Activated CD8-positive, alpha-beta T cell treated with anti-CD3 and anti-CD28 coated beads for 36 hours (primary cell): ENCODE measurements at regions of chr1 and their contacts with region 1.

Region 1: DNA sequence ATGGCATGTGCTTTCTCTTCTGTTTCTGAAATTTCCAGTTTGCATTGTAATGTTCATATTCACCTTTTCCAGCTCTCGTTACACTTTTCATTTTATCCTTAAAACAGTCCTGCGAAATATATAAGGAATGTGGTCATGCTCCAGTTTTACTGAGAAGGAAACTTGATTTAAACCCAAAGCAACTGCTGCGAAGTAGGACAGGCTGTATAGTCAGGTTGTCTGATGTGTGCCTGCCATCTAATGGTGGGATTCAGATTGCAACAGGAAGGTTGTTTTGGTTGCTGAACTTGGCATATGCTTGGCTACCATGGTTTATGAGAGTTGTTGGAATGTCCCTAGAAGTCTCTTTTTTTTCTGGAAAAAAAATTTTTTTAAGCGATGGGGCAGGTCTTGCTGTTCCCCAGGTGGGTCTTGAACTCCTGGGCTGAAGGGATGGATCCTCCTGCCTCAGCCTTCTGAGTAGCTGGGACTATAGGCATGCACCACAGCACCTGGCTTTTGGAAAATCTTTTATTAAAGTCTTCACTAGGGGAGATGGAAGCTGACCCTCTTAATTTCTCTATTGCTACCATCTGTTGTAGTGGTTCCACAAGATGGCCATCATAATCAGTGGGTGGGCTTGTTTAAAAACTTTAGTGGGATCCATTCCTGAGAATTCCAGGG is 86.9 kb downstream of the UCK2 start:
- DNase-seq: peak; percentile 79
- ATAC-seq: peak; percentile 91
- H3K4me3 Mint-ChIP-seq: no peak overlapping the region
- H3K27ac Mint-ChIP-seq: no peak overlapping the region
- H3K4me1 Mint-ChIP-seq: no peaks in the 10 kb centered on the region
- H3K27me3 Mint-ChIP-seq: no peaks in the 10 kb centered on the region
- CTCF ChIP-seq: peak; percentile 85

Region 2: GRCh38 chr1:165392634-165393571 is 521.4 kb before region 1 on chr1:
- CTCF ChIA-PET with region 1: interaction called, 4 read pairs
- POLR2A ChIA-PET with region 1: no interaction called
- intact Hi-C with region 1: loop called (anchors 10 kb)
- DNase-seq: peak; percentile 89
- ATAC-seq: peak; percentile 99
- H3K4me3 Mint-ChIP-seq: peak overlapping the region; percentile 60
- H3K27ac Mint-ChIP-seq: peak overlapping the region; percentile 77
- H3K4me1 Mint-ChIP-seq: peaks cover 9% of the 10 kb centered on the region
- H3K27me3 Mint-ChIP-seq: peaks cover 66% of the 10 kb centered on the region
- CTCF ChIP-seq: peak; percentile 87

Region 3: GRCh38 chr1:165697881-165698760 is 216.1 kb before region 1 on chr1 and contains the start of gene ALDH9A1:
- CTCF ChIA-PET with region 1: interaction called, 12 read pairs
- POLR2A ChIA-PET with region 1: interaction called, 3 read pairs
- intact Hi-C with region 1: no loop called
- DNase-seq: peak; percentile 91
- ATAC-seq: peak; percentile 91
- H3K4me3 Mint-ChIP-seq: peak within 1 kb of the TSS; percentile 83
- H3K27ac Mint-ChIP-seq: peak within 1 kb of the TSS; percentile 93
- H3K4me1 Mint-ChIP-seq: peaks cover 19% of the 10 kb centered on the region
- H3K27me3 Mint-ChIP-seq: peaks cover 2% of the 10 kb centered on the region
- CTCF ChIP-seq: no peak
- total RNA-seq, gene ALDH9A1: 25.6 to 28.2 TPM

Region 4: DNA sequence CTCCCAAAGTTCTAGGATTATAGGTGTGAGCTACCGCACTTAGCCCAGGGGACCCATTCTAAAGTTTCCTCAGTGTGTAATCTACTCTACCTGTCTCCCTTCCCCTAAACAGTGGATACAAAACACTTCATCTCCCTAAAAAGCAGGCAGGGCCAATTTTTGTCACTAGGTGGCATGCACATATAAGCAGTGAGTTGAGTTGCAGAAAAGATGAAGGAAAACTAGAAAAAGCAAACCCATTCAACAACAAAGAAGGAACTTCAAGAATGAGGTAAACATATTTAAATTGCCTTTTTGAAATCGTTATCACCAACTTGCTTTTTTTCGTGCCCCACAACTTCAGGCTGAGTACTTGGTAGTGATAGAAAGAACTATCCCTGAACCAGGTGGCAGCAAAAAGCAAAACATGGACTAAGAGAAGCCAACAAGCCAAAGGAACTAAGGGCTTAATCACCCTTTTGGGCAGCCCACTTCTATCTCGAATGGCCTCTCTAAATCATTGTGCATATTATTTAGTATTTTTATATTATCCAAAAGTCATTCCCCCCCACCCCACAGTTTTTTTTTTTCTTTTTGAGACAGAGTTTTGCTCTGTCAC is 196.2 kb before region 1 on chr1:
- CTCF ChIA-PET with region 1: interaction called, 7 read pairs
- POLR2A ChIA-PET with region 1: no interaction called
- intact Hi-C with region 1: loop called (anchors 2 kb)
- DNase-seq: peak; percentile 65
- ATAC-seq: peak; percentile 30
- H3K4me3 Mint-ChIP-seq: no peak overlapping the region
- H3K27ac Mint-ChIP-seq: no peak overlapping the region
- H3K4me1 Mint-ChIP-seq: no peaks in the 10 kb centered on the region
- H3K27me3 Mint-ChIP-seq: no peaks in the 10 kb centered on the region
- CTCF ChIP-seq: peak; percentile 43

Region 5: GRCh38 chr1:165836664-165837482 is 77.4 kb before region 1 on chr1:
- CTCF ChIA-PET with region 1: no interaction called
- POLR2A ChIA-PET with region 1: no interaction called
- intact Hi-C with region 1: no loop called
- DNase-seq: no peak
- ATAC-seq: no peak
- H3K4me3 Mint-ChIP-seq: no peak overlapping the region
- H3K27ac Mint-ChIP-seq: no peak overlapping the region
- H3K4me1 Mint-ChIP-seq: peaks cover 24% of the 10 kb centered on the region
- H3K27me3 Mint-ChIP-seq: no peaks in the 10 kb centered on the region
- CTCF ChIP-seq: no peak

Region 6: DNA sequence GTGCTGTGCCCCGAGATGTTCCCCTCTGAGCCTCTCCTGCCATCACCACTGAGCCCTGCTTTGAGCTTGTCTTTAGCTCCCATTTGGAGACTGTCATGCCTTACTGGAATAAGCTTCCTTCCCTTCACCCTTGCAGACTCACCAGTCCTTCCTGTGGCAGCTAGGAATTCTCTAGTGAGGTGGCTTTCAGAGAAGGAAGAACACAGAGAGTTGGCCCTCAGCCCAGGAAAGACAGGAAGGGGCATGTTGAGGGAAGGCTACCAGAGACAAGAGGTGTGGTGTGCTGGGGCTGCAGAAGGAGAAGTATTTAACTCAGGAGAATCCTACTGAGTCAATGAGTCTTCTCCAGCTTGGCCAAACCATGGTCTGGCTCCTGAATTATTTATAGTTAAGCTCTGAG is 10.6 kb before region 1 on chr1:
- CTCF ChIA-PET with region 1: interaction called, 12 read pairs
- POLR2A ChIA-PET with region 1: no interaction called
- intact Hi-C with region 1: no loop called
- DNase-seq: no peak
- ATAC-seq: no peak
- H3K4me3 Mint-ChIP-seq: no peak overlapping the region
- H3K27ac Mint-ChIP-seq: no peak overlapping the region
- H3K4me1 Mint-ChIP-seq: no peaks in the 10 kb centered on the region
- H3K27me3 Mint-ChIP-seq: no peaks in the 10 kb centered on the region
- CTCF ChIP-seq: no peak

Region 7: GRCh38 chr1:165928075-165928731 is 13.9 kb after region 1 on chr1:
- CTCF ChIA-PET with region 1: interaction called, 10 read pairs
- POLR2A ChIA-PET with region 1: no interaction called
- intact Hi-C with region 1: no loop called
- DNase-seq: peak; percentile 71
- ATAC-seq: peak; percentile 85
- H3K4me3 Mint-ChIP-seq: no peak overlapping the region
- H3K27ac Mint-ChIP-seq: no peak overlapping the region
- H3K4me1 Mint-ChIP-seq: no peaks in the 10 kb centered on the region
- H3K27me3 Mint-ChIP-seq: peaks cover 19% of the 10 kb centered on the region
- CTCF ChIP-seq: peak; percentile 72

Region 8: DNA sequence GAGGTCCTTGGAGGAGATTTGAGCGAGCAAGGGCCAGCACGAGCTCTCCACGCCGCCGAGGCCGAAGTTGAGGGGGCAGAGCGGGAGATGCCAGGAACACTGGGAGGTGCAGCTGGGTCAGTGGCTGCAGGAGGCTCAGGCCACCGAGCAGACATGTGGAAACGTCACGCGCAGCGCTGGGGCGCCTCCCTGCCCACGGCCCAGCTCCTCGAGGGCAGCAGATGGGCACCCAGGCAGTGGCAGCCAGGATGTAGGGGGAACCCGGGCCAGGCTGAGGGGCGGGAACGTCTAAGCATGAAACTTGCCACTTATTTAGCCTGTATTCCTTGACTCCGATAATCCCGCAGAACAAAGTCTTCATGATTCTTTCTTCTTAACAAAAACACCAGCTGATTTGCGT is 27.3 kb after region 1 on chr1:
- CTCF ChIA-PET with region 1: no interaction called
- POLR2A ChIA-PET with region 1: no interaction called
- intact Hi-C with region 1: loop called (anchors 2 kb)
- DNase-seq: no peak
- ATAC-seq: no peak
- H3K4me3 Mint-ChIP-seq: no peak overlapping the region
- H3K27ac Mint-ChIP-seq: no peak overlapping the region
- H3K4me1 Mint-ChIP-seq: no peaks in the 10 kb centered on the region
- H3K27me3 Mint-ChIP-seq: peaks cover 3% of the 10 kb centered on the region
- CTCF ChIP-seq: no peak

Region 9: GRCh38 chr1:165960136-165960535 is 45.9 kb after region 1 on chr1:
- CTCF ChIA-PET with region 1: no interaction called
- POLR2A ChIA-PET with region 1: no interaction called
- intact Hi-C with region 1: no loop called
- DNase-seq: no peak
- ATAC-seq: no peak
- H3K4me3 Mint-ChIP-seq: no peak overlapping the region
- H3K27ac Mint-ChIP-seq: no peak overlapping the region
- H3K4me1 Mint-ChIP-seq: no peaks in the 10 kb centered on the region
- H3K27me3 Mint-ChIP-seq: peaks cover 2% of the 10 kb centered on the region
- CTCF ChIP-seq: no peak